A549 (cell line): ENCODE measurements at regions of chr5 and their contacts with region 1.

Region 1: DNA sequence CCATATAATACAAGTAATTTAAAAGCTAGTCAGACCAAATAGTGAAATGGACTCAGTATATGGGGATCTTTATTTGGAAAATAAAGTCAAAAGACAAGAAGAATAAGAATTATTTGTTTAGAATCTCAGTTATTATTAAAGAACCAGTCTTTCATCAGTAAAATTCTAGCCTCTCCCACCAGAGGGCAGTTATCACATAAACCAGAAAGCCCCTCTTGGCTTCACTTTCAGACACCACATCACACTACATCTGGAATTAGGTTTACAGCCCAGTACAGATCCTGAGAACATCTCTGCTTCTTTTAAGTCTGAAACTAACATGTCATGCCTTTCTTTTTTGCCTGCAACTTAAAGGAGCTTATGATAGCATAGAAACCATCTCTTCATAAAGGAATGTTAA is 12.2 kb upstream of the HSPB3 start:
- DNase-seq: peak; percentile 27 to 33
- ATAC-seq: peak; percentile 55 to 81; a peak in 3 of 6 replicates
- H3K4me3 ChIP-seq: no peak overlapping the region
- H3K27ac ChIP-seq: no peak overlapping the region; a peak in 1 of 6 replicates
- H3K4me1 ChIP-seq: peaks cover 25% of the 10 kb centered on the region
- CTCF ChIP-seq: peak; percentile 57
- EP300 ChIP-seq: no peak
- POLR2A ChIP-seq: no peak
- RAD21 ChIP-seq: peak; percentile 57

Region 2: DNA sequence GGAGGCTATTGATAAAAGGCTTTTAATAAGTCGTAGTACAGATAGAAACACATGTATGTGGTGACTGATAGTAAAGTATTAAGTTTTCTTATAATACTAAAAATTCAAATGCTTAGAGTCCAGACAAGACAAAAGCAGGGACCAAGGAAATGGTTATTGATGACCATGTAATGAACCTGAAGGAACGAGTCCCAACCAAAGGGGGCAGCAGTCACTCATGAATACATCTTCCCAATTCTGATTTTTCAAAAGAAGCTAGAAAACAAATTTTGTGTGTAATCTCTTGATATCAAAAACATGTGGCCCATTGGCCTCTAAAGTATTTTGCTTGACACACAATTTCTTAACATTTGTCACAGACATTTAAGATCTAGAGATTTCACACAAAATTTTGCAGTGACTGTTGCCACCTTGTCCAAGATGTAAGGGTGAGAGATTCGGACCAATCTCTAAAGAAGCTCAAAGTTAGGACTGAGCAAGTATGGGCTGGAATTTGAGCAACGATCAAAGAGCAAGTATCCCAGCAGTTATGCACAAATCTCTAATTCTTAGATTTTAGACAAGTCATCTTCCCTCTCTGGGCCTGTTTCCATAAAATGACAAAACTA is 199.7 kb before region 1 on chr5:
- CTCF ChIA-PET with region 1: interaction called, 10 read pairs
- POLR2A ChIA-PET with region 1: no interaction called
- DNase-seq: peak; percentile 12 to 52
- ATAC-seq: peak; percentile 50 to 65; a peak in 3 of 6 replicates
- H3K4me3 ChIP-seq: no peak overlapping the region
- H3K27ac ChIP-seq: no peak overlapping the region
- H3K4me1 ChIP-seq: 0 out of 3 replicates have a peak, but pooled peaks cover 3% of the 10 kb centered on the region
- CTCF ChIP-seq: peak; percentile 84
- EP300 ChIP-seq: no peak
- POLR2A ChIP-seq: no peak
- RAD21 ChIP-seq: peak; percentile 80

Region 3: DNA sequence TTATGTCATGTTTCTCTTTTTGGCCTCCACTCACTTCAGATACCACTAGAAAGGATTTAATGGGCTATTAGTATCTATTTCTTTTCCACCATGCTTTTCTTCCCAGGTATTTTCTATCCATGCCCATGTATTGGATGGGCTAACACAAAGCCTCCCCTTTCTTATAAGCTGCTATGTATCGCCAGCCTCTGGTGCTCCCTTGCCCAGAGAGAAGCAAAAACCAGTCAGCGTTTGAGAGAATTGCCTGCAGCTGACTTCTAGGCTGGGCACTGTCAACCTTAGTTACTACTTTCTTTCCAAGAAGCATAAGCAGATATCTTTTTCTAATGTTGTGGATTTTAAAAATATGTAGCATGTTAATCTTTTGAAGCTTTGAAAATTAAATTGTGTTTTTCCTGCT is 18.0 kb before region 1 on chr5:
- CTCF ChIA-PET with region 1: interaction called, 11 read pairs
- POLR2A ChIA-PET with region 1: no interaction called
- DNase-seq: no peak
- ATAC-seq: no peak
- H3K4me3 ChIP-seq: no peak overlapping the region
- H3K27ac ChIP-seq: no peak overlapping the region
- H3K4me1 ChIP-seq: no peaks in the 10 kb centered on the region
- CTCF ChIP-seq: no peak
- EP300 ChIP-seq: no peak
- POLR2A ChIP-seq: no peak
- RAD21 ChIP-seq: no peak

Region 4: DNA sequence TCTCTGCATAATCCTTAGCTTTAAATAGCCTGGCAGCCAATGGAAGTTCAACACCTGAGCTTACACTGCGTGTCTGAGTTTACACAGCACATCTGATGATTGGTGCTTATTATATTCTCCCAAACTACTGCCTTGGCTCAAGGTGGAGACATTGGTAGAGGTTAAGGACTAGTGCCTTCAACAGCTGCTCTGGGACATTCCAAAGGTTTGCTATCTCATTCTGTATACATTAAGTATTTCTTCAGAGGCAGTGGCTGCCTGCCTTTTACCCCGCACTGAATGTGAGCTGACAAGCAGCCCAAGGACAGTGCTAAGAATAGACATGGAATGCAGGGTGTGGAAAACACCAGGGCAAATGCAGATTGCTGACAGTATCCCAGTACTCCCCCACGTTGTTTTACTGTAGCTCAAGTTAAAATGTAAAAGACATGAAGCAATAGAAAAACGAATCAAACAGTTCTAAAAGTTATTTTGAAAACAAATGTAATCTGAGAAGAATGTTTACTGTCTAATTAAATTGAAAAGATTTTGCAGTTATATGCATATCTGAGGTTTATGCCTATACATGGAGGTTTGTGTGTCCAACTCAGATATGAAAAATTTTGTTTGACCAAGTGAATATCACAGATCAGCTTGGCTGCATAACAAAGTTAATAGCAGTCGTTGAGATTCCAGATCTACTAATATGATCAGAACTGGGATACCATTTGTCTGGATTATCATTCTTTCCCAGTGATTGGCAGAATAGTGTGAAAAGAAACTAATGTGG is 14.0 kb after region 1 on chr5:
- CTCF ChIA-PET with region 1: interaction called, 12 read pairs
- POLR2A ChIA-PET with region 1: no interaction called
- DNase-seq: peak; percentile 55 to 85
- ATAC-seq: peak; percentile 95 to 96
- H3K4me3 ChIP-seq: no peak overlapping the region
- H3K27ac ChIP-seq: peak overlapping the region; percentile 58 to 70; a peak in 5 of 6 replicates
- H3K4me1 ChIP-seq: peaks cover 46% of the 10 kb centered on the region
- CTCF ChIP-seq: no peak
- EP300 ChIP-seq: no peak; a peak in 1 of 5 replicates
- POLR2A ChIP-seq: no peak
- RAD21 ChIP-seq: no peak

Region 5: DNA sequence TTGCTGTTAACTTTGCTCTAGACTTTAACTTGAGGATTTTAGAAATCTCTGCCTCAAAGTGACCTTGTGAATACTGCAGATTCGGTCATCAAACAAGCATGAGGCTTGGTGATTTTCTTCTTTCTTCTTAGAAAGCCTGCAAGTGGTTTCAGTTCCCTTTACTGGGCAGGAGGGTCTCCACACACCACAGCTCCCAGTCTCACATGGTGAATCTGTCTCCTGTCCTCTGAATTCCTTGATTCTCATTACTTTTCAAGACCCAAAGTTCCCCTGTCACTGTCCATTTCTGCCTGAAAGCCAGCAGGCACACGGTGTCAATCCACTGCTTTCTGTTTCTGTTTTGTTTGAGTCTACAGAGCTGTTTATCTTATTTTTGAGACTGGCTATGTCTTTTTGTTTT is 26.4 kb after region 1 on chr5:
- CTCF ChIA-PET with region 1: interaction called, 11 read pairs
- POLR2A ChIA-PET with region 1: no interaction called
- DNase-seq: no peak
- ATAC-seq: no peak
- H3K4me3 ChIP-seq: no peak overlapping the region
- H3K27ac ChIP-seq: no peak overlapping the region
- H3K4me1 ChIP-seq: peaks cover 7% of the 10 kb centered on the region; the same call in 2 of the 3 replicates
- CTCF ChIP-seq: no peak
- EP300 ChIP-seq: no peak
- POLR2A ChIP-seq: no peak
- RAD21 ChIP-seq: no peak

Region 6: GRCh38 chr5:54570916-54571315 is 127.6 kb after region 1 on chr5:
- CTCF ChIA-PET with region 1: no interaction called
- POLR2A ChIA-PET with region 1: no interaction called
- DNase-seq: no peak
- ATAC-seq: no peak
- H3K4me3 ChIP-seq: no peak overlapping the region
- H3K27ac ChIP-seq: no peak overlapping the region
- H3K4me1 ChIP-seq: no peaks in the 10 kb centered on the region
- CTCF ChIP-seq: no peak
- EP300 ChIP-seq: no peak
- POLR2A ChIP-seq: no peak
- RAD21 ChIP-seq: no peak